H1 (cell line): ENCODE measurements at regions of chr19 and their contacts with region 1.

Region 1: DNA sequence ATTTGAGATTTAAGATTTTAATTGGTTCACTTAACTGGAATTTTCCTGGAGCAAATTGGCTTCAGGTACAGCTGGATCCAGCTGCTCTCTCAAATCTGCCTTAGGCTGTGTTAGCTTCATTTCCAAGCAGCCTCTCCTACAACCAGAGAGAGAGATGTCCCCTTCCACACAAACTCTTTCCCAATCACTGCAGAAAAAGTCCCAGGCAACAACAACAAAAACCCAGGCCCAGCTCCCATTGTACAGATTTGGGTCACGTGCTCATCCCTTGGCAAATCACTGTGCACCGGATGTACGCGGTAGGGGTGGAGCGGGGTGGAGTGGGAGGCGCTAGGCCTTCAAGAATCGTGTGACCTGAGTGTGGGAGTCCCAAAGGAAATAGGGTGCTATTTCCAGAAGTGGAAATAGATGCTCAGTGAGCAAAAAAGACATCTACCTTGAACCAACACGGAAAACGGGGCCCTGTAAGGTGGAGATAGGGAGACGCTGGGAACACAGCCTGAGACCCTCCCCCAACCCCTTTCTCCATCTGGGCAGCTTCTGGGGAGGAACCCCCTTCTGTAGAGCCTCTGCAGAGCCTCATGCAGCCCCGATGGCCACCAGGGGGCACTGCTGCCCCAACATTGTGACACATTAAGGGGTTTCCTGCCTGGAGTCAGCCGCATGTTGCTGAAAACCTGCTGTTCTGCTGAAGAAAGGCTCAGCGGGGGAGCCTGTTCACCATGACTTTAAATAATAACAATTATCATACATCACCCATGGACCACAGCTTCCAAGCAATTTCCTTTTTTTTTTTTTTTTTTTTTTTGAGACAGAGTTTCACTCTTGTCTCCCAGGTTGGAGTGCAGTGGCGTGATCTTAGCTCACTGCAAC is 25.4 kb downstream of the HPN start:
- DNase-seq: peak; percentile 96 to 99
- H3K4me3 ChIP-seq: peak overlapping the region in 2 of 4 experiments; percentile 21 to 44; a peak in 3 of 8 replicates
- H3K27ac ChIP-seq: peak overlapping the region; percentile 54; the same call in 1 of the 2 replicates
- H3K4me1 ChIP-seq: peaks cover 3 to 13% (median 11%) of the 10 kb centered on the region in 4 experiments
- H3K27me3 ChIP-seq: peaks cover 0 to 2% (median 0%) of the 10 kb centered on the region in 4 experiments; a peak in 1 of 7 replicates
- CTCF ChIP-seq: peak; percentile 88 to 98 (median 96)
- EP300 ChIP-seq: no peak
- POLR2A ChIP-seq: 0 out of 3 replicates have a peak, but pooled peaks of 1 of the 2 experiments have one; percentile 25
- RAD21 ChIP-seq: peak; percentile 93 to 97

Region 2: DNA sequence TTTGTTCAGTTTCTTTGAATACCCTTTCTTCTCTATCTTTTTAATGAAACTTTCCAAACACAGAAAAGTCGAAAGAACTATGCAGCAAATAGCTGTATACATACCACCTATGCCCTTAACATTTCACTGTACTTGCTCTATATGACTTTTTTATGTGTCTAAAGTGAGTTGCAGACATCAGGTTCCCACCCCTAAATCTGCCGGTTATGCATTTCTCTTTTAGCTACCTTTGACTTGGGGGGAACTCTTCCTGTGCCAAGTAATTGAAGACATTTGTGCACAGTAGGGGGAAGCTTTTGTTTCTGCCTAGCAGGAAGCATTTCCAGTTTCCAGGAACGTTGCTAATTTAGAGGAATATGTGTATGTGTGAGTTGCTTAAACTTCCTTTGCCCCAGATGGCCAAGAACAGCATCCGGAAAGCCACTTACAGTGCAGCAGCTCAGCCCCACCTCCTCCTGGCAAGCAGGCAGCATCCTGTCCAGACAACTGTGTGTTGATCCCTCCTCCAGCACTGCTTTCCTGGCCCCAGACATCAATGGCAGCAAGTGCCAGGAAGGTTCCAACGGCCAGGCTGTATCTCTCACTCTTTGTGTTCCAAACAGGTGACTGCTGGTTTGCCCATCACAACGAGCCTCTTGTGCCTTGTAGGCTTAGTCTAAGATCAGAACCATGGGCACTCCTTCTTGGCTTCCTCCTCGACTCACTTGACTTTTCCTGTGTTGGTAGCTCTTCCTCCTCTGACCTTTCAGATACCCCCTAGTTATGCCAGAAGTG is 81.5 kb before region 1 on chr19:
- CTCF ChIA-PET with region 1: no interaction called
- POLR2A ChIA-PET with region 1: no interaction called
- DNase-seq: peak in 1 of 2 experiments; percentile 60
- H3K4me3 ChIP-seq: 0 out of 8 replicates have a peak overlapping the region, but pooled peaks of 1 of the 4 experiments have one; percentile 2
- H3K27ac ChIP-seq: peak overlapping the region; percentile 47; the same call in 1 of the 2 replicates
- H3K4me1 ChIP-seq: peaks cover 2 to 7% (median 4%) of the 10 kb centered on the region in 4 experiments; a peak in 5 of 7 replicates
- H3K27me3 ChIP-seq: no peaks in the 10 kb centered on the region
- CTCF ChIP-seq: peak; percentile 4 to 35 (median 21); a peak in 2 of 4 replicates
- EP300 ChIP-seq: no peak
- POLR2A ChIP-seq: no peak
- RAD21 ChIP-seq: peak; percentile 2 to 10; a peak in 2 of 4 replicates

Region 3: GRCh38 chr19:35044317-35045117 is 22.4 kb before region 1 on chr19:
- CTCF ChIA-PET with region 1: interaction called, 25 read pairs
- POLR2A ChIA-PET with region 1: interaction called, 5 read pairs
- DNase-seq: peak in 1 of 2 experiments; percentile 95
- H3K4me3 ChIP-seq: no peak overlapping the region
- H3K27ac ChIP-seq: no peak overlapping the region
- H3K4me1 ChIP-seq: peaks cover 5 to 37% (median 23%) of the 10 kb centered on the region in 4 experiments
- H3K27me3 ChIP-seq: no peaks in the 10 kb centered on the region
- CTCF ChIP-seq: peak; percentile 78 to 99 (median 84)
- EP300 ChIP-seq: no peak
- POLR2A ChIP-seq: no peak
- RAD21 ChIP-seq: peak; percentile 66 to 72

Region 4: GRCh38 chr19:35080613-35081170 is 13.8 kb after region 1 on chr19:
- CTCF ChIA-PET with region 1: interaction called, 26 read pairs
- POLR2A ChIA-PET with region 1: interaction called, 9 read pairs
- DNase-seq: no peak
- H3K4me3 ChIP-seq: no peak overlapping the region
- H3K27ac ChIP-seq: no peak overlapping the region
- H3K4me1 ChIP-seq: peaks cover 0 to 3% (median 1%) of the 10 kb centered on the region in 4 experiments; a peak in 2 of 7 replicates
- H3K27me3 ChIP-seq: peaks cover 0 to 2% (median 0%) of the 10 kb centered on the region in 4 experiments; a peak in 3 of 7 replicates
- CTCF ChIP-seq: no peak
- EP300 ChIP-seq: no peak
- POLR2A ChIP-seq: no peak
- RAD21 ChIP-seq: no peak

Region 5: GRCh38 chr19:35098413-35099049 is 31.6 kb after region 1 on chr19:
- CTCF ChIA-PET with region 1: interaction called, 13 read pairs
- POLR2A ChIA-PET with region 1: interaction called, 4 read pairs
- DNase-seq: no peak
- H3K4me3 ChIP-seq: no peak overlapping the region
- H3K27ac ChIP-seq: no peak overlapping the region
- H3K4me1 ChIP-seq: peaks cover 0 to 3% (median 1%) of the 10 kb centered on the region in 4 experiments; a peak in 3 of 7 replicates
- H3K27me3 ChIP-seq: no peaks in the 10 kb centered on the region
- CTCF ChIP-seq: no peak
- EP300 ChIP-seq: no peak
- POLR2A ChIP-seq: no peak
- RAD21 ChIP-seq: no peak

Region 6: GRCh38 chr19:35114353-35115176 is 47.6 kb after region 1 on chr19:
- CTCF ChIA-PET with region 1: interaction called, 21 read pairs
- POLR2A ChIA-PET with region 1: interaction called, 7 read pairs
- DNase-seq: peak; percentile 73 to 99
- H3K4me3 ChIP-seq: peak overlapping the region in 3 of 4 experiments; percentile 23 to 56 (median 31); a peak in 5 of 8 replicates
- H3K27ac ChIP-seq: no peak overlapping the region
- H3K4me1 ChIP-seq: peaks cover 0 to 23% (median 14%) of the 10 kb centered on the region in 4 experiments; a peak in 6 of 7 replicates
- H3K27me3 ChIP-seq: peaks cover 0 to 2% (median 0%) of the 10 kb centered on the region in 4 experiments; a peak in 1 of 7 replicates
- CTCF ChIP-seq: peak; percentile 92 to 99 (median 94)
- EP300 ChIP-seq: no peak
- POLR2A ChIP-seq: no peak
- RAD21 ChIP-seq: peak; percentile 86 to 91